PC-3 (cell line): ENCODE measurements at regions of chrX and their contacts with region 1.

Region 1: GRCh38 chrX:108664701-108665100 is 71.7 kb downstream of the IRS4 start:
- DNase-seq: no peak
- ATAC-seq: no peak
- H3K4me3 ChIP-seq: no peak overlapping the region
- H3K27ac ChIP-seq: no peak overlapping the region
- H3K4me1 ChIP-seq: no peaks in the 10 kb centered on the region
- H3K27me3 ChIP-seq: no peaks in the 10 kb centered on the region
- CTCF ChIP-seq: no peak

Region 2: GRCh38 chrX:108209006-108209554 is 455.6 kb before region 1 on chrX:
- CTCF ChIA-PET with region 1: no interaction called
- POLR2A ChIA-PET with region 1: no interaction called
- intact Hi-C with region 1: loop called (anchors 5 kb)
- DNase-seq: no peak
- ATAC-seq: no peak
- H3K4me3 ChIP-seq: no peak overlapping the region
- H3K27ac ChIP-seq: no peak overlapping the region
- H3K4me1 ChIP-seq: no peaks in the 10 kb centered on the region
- H3K27me3 ChIP-seq: no peaks in the 10 kb centered on the region
- CTCF ChIP-seq: no peak

Region 3: GRCh38 chrX:108537005-108537404 is 127.7 kb before region 1 on chrX:
- CTCF ChIA-PET with region 1: no interaction called
- POLR2A ChIA-PET with region 1: no interaction called
- intact Hi-C with region 1: no loop called
- DNase-seq: peak; percentile 73
- ATAC-seq: peak; percentile 67
- H3K4me3 ChIP-seq: no peak overlapping the region
- H3K27ac ChIP-seq: no peak overlapping the region
- H3K4me1 ChIP-seq: peaks cover 11% of the 10 kb centered on the region; the same call in 1 of the 2 replicates
- H3K27me3 ChIP-seq: no peaks in the 10 kb centered on the region
- CTCF ChIP-seq: peak; percentile 77